Body of pancreas (tissue), 4 donors: ENCODE measurements at regions of chr17 and their contacts with region 1.

Region 1: GRCh38 chr17:63434876-63435684 is 11.0 kb downstream of the CYB561 start:
- DNase-seq: peak; percentile 93 to 96 (median 94)
- ATAC-seq: peak; percentile 73
- H3K4me3 ChIP-seq: no peak overlapping the region
- H3K27ac ChIP-seq: peak overlapping the region; percentile 53 to 87 (median 73)
- H3K4me1 ChIP-seq: peaks cover 75% of the 10 kb centered on the region
- H3K27me3 ChIP-seq: no peaks in the 10 kb centered on the region
- CTCF ChIP-seq: peak in 1 of 7 experiments; percentile 10
- POLR2A ChIP-seq: peak in 2 of 3 donors; percentile 7 to 26

Region 2: DNA sequence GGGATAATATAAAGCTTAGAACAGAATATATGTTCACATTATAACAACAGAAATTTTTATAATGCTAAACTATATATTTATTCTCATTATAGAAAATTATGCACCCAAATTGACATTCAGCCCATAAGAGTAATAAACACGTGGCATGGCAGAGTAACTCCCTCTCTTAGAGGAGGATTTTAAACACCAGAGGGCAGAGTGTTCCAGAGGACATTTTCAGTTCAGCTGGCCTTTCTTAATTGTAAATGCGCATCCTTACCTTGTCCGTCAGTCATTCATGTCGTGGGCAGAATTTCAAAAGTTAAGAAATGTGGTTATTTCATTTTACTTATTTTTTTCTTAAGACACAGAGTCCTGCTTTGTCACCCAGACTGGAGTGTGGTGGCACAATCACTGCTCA is 321.9 kb before region 1 on chr17:
- intact Hi-C with region 1: no loop called
- DNase-seq: no peak
- ATAC-seq: no peak
- H3K4me3 ChIP-seq: no peak overlapping the region
- H3K27ac ChIP-seq: no peak overlapping the region
- H3K4me1 ChIP-seq: no peaks in the 10 kb centered on the region
- H3K27me3 ChIP-seq: no peaks in the 10 kb centered on the region
- CTCF ChIP-seq: peak in 2 of 7 experiments; percentile 5 to 16
- POLR2A ChIP-seq: no peak

Region 3: GRCh38 chr17:63406689-63407330 is 28.3 kb before region 1 on chr17:
- intact Hi-C with region 1: no loop called
- DNase-seq: peak; percentile 81 to 90 (median 82)
- ATAC-seq: peak; percentile 83
- H3K4me3 ChIP-seq: no peak overlapping the region
- H3K27ac ChIP-seq: no peak overlapping the region
- H3K4me1 ChIP-seq: no peaks in the 10 kb centered on the region
- H3K27me3 ChIP-seq: no peaks in the 10 kb centered on the region
- CTCF ChIP-seq: peak; percentile 76 to 90 (median 86)
- POLR2A ChIP-seq: no peak

Region 4: GRCh38 chr17:63478791-63479494 is 43.9 kb after region 1 on chr17:
- intact Hi-C with region 1: loop called (anchors 5 kb)
- DNase-seq: peak; percentile 86 to 88 (median 88)
- ATAC-seq: peak; percentile 75
- H3K4me3 ChIP-seq: no peak overlapping the region
- H3K27ac ChIP-seq: no peak overlapping the region
- H3K4me1 ChIP-seq: peaks cover 42% of the 10 kb centered on the region
- H3K27me3 ChIP-seq: no peaks in the 10 kb centered on the region
- CTCF ChIP-seq: peak; percentile 72 to 93 (median 88)
- POLR2A ChIP-seq: no peak

Region 5: DNA sequence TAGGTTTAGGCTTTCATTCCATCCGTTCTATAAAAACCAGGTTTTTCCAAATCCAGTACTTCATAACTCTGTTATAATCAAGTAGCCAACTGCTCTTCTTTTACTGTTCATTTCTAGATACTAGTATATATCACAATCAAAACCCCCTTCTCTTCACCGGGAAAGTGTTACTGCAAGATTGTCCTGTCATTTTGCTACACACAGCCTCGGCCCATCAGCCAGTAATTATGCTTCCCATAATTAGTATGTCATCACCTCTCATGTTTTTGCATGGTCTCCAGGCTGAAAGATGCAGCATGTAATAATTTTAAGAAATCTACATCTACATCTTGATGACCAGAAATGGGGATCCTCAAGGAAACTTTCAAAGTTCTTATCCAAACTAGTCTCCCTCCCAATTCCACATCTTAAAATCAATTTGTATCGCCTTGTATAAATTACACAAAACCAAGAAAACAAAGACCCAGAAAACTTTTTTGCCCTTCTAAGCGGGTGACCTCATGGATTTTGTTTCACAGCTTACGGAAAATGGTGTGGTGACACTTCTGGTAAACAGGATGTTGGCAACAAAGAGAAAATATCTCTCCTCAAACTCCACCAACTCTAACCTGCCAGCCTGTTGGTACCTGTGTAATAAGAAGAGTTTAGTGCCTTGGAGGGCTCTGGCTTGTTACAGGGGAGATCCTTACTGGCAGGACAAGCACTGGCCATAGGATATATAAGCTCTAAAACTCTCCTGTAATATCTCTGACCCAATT is 174.9 kb after region 1 on chr17:
- intact Hi-C with region 1: loop called (anchors 5 kb)
- DNase-seq: no peak
- ATAC-seq: no peak
- H3K4me3 ChIP-seq: no peak overlapping the region
- H3K27ac ChIP-seq: no peak overlapping the region
- H3K4me1 ChIP-seq: no peaks in the 10 kb centered on the region
- H3K27me3 ChIP-seq: no peaks in the 10 kb centered on the region
- CTCF ChIP-seq: no peak
- POLR2A ChIP-seq: no peak